CD8-positive, alpha-beta T cell (primary cell): ENCODE measurements at regions of chr20 and their contacts with region 1.

Region 1: DNA sequence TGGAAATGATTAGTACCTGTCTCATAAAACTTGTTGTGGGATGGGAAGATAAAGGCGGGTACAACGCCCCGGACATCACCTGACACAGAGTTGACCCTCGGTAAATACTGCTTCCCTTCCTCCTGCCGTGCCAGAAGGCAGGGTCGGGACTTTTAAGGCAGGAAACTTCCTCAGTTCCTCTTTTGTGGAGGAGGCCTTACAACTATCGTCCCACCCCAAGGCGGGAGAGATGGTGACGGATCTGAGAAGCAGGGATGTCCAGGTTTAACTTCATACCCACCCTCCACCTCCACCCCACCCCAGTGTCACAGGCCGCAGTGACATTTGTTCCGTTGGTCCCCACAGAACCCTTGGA is 555 bp downstream of the DNTTIP1 start:
- DNase-seq: peak in 3 of 9 experiments; percentile 8 to 20 (median 12)
- ATAC-seq: peak; percentile 10
- H3K4me3 ChIP-seq: peak overlapping the region; percentile 82 to 100
- H3K4me3 Mint-ChIP-seq: peak overlapping the region; percentile 93
- H3K27ac ChIP-seq: peak overlapping the region; percentile 87 to 96
- H3K27ac Mint-ChIP-seq: peak overlapping the region; percentile 93
- H3K4me1 ChIP-seq: peaks cover 16% of the 10 kb centered on the region
- H3K4me1 Mint-ChIP-seq: peaks cover 19% of the 10 kb centered on the region
- H3K27me3 ChIP-seq: no peaks in the 10 kb centered on the region
- H3K27me3 Mint-ChIP-seq: no peaks in the 10 kb centered on the region
- CTCF ChIP-seq: no peak

Region 2: GRCh38 chr20:45812157-45813020 is 20.1 kb after region 1 on chr20 and contains the start of gene UBE2C:
- CTCF ChIA-PET with region 1: no interaction called
- POLR2A ChIA-PET with region 1: no interaction called
- intact Hi-C with region 1: loop called (anchors 1 kb)
- DNase-seq: peak; percentile 87 to 98 (median 92)
- ATAC-seq: peak; percentile 99
- H3K4me3 ChIP-seq: peak within 1 kb of the TSS; percentile 62 to 67
- H3K4me3 Mint-ChIP-seq: peak within 1 kb of the TSS; percentile 80
- H3K27ac ChIP-seq: peak within 1 kb of the TSS in 1 of 2 experiments; percentile 51
- H3K27ac Mint-ChIP-seq: peak within 1 kb of the TSS; percentile 77
- H3K4me1 ChIP-seq: peaks cover 10% of the 10 kb centered on the region
- H3K4me1 Mint-ChIP-seq: peaks cover 10% of the 10 kb centered on the region
- H3K27me3 ChIP-seq: no peaks in the 10 kb centered on the region
- H3K27me3 Mint-ChIP-seq: no peaks in the 10 kb centered on the region
- CTCF ChIP-seq: no peak
- total RNA-seq, gene UBE2C: 0.60 TPM in 1 of 2 experiments, not detected in the other

Region 3: DNA sequence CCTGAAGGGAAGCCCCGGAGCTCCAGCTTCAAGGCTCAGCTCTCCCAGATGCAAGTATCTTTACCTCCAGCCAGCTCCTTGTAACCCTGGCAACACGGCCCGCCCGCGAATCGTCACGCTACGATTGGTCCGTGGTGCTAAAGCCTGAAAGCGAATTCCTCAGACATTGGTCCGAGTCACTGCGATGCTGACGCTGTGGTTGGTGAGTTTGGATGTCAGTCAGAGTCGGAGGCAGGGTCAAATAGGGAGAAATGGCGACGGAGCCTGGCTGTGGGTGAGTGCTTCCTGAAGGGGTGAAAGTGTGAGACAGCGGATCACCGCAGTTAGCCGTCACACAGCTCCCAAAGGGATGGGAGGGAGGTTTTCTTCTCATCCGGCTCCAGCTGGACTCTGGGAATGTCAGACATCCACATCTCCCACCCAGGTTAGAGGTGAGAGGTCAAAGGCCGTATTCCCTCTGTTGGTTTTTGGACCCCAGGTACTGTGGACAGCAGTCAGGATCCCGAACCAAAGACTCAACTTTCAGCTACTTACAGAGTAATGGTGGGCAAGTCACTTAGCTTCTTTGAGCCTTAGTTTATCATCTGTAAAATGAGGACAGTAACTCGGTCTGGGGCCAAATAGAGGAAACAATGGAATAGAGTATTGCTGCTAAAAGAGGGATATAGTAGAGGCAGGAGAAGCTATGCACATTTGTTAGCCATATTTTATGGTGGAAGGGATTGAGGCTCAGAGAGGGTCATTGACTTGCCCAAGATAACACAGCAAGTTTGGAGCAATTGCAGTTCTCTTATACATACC is 88.9 kb after region 1 on chr20 and contains the start of gene ZSWIM1:
- CTCF ChIA-PET with region 1: no interaction called
- POLR2A ChIA-PET with region 1: no interaction called
- intact Hi-C with region 1: loop called in 1 of 2 experiments (anchors 5 kb)
- DNase-seq: peak; percentile 96 to 100 (median 99)
- ATAC-seq: peak; percentile 97
- H3K4me3 ChIP-seq: peak within 1 kb of the TSS; percentile 71 to 82
- H3K4me3 Mint-ChIP-seq: peak within 1 kb of the TSS; percentile 91
- H3K27ac ChIP-seq: peak within 1 kb of the TSS; percentile 75 to 87
- H3K27ac Mint-ChIP-seq: peak within 1 kb of the TSS; percentile 96
- H3K4me1 ChIP-seq: peaks cover 18% of the 10 kb centered on the region
- H3K4me1 Mint-ChIP-seq: peaks cover 40% of the 10 kb centered on the region
- H3K27me3 ChIP-seq: no peaks in the 10 kb centered on the region
- H3K27me3 Mint-ChIP-seq: no peaks in the 10 kb centered on the region
- CTCF ChIP-seq: no peak
- total RNA-seq, gene ZSWIM1: 8.5 to 9.2 TPM